H1 (cell line): ENCODE measurements at regions of chr20 and their contacts with region 1.

Region 1: DNA sequence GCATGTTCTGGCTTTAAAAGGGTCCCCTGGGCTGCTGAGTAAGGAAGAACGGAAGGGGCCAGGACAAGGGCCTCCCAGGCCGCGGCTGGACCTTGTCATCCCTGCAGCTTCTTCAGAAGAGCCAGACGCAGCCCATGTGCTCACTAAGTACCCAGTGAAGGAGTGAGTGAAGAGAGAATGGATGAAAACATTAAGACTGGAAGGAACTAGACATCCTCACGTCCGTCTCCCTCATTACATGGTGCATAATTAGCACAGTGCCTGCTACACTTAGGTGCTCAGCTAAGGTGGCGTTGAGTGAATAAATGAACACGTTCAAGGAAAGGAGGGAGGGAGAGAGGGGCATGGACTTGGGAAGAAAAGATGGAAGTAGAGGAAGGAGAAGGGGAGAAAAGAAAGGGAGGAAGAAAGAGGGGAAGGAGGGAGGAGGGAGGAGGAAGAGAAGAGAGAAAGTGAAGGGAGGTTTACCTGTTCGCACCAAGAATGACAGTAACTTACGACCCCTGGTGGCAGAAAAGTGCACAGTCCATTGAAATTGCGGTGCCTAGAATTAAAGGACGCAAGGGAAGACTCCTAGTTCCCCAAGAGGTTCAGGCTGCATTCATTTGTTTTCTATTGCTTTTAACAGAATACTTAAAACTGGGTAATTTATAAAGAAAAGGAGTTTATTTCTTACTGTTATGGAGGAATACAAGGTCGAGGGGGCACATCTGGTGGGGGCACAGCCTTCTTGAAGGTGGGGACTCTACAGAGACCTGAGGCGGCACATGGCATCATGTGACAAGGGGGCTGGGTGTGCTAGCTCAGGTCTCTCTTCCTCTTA is 8.0 kb downstream of the TP53RK start:
- DNase-seq: peak in 1 of 2 experiments; percentile 92
- H3K4me3 ChIP-seq: no peak overlapping the region
- H3K27ac ChIP-seq: no peak overlapping the region
- H3K4me1 ChIP-seq: peaks cover 12 to 22% (median 16%) of the 10 kb centered on the region in 4 experiments
- H3K27me3 ChIP-seq: no peaks in the 10 kb centered on the region
- CTCF ChIP-seq: peak; percentile 49 to 91 (median 79)
- EP300 ChIP-seq: no peak
- POLR2A ChIP-seq: no peak
- RAD21 ChIP-seq: peak; percentile 77 to 80

Region 2: DNA sequence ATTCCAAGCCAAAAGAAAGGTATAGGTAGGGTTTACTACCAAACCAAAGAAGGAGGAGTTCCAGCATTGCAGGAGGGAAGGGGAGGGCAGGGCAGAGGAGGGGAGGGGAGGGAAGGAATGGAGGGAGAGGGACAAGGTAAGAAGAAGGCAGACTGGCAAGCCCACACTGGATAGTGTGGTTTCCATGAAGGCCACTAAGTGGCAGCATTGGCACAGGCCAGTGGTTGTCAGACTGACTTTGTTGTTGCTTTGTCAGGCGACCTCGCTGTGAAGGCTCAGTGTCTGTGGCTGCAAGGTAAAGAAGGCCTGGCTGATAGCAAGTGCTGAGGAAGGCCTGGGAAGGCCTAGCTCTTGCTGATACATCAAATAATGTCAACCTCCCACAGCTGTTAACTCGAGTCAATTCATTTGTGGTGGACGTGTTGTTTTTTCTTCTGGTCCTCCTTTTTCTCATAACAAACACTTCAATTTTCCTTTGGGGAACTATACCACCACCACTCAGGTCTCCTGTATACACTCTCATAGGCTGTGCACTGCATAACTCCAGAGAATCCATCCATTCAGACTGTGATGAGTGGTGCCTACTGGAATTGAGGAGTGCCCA is 160.2 kb before region 1 on chr20:
- CTCF ChIA-PET with region 1: interaction called, 63 read pairs
- POLR2A ChIA-PET with region 1: interaction called, 10 read pairs
- DNase-seq: peak; percentile 59 to 71
- H3K4me3 ChIP-seq: no peak overlapping the region
- H3K27ac ChIP-seq: no peak overlapping the region
- H3K4me1 ChIP-seq: no peaks in the 10 kb centered on the region; a peak in 1 of 7 replicates
- H3K27me3 ChIP-seq: no peaks in the 10 kb centered on the region
- CTCF ChIP-seq: peak; percentile 87 to 99 (median 91)
- EP300 ChIP-seq: no peak
- POLR2A ChIP-seq: no peak
- RAD21 ChIP-seq: peak; percentile 95 to 99

Region 3: GRCh38 chr20:46552460-46553420 is 128.5 kb before region 1 on chr20:
- CTCF ChIA-PET with region 1: interaction called, 10 read pairs
- POLR2A ChIA-PET with region 1: interaction called, 6 read pairs
- DNase-seq: no peak
- H3K4me3 ChIP-seq: no peak overlapping the region
- H3K27ac ChIP-seq: no peak overlapping the region
- H3K4me1 ChIP-seq: peaks cover 12 to 33% (median 23%) of the 10 kb centered on the region in 4 experiments
- H3K27me3 ChIP-seq: no peaks in the 10 kb centered on the region; a peak in 2 of 7 replicates
- CTCF ChIP-seq: no peak
- EP300 ChIP-seq: no peak
- POLR2A ChIP-seq: no peak
- RAD21 ChIP-seq: no peak

Region 4: DNA sequence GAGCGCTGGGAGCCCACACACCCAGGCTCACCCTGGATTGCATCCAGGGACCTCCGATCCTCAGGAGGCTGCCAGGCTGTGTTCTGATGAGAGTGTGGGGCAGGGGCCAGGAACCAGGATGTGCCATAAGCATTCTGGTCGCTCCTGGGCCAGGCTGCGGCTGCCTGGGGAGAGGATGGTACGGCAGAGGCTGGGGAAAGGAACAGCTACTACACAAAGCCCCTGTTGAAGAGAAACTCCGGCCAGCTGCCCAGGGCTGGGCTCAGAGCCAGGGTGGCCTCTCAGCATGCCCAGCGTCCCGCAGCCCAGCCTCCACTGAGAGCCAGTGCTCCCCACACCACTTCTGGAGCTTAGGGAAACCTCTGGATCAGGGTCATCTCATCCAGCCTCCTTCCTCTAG is 109.1 kb before region 1 on chr20:
- CTCF ChIA-PET with region 1: interaction called, 10 read pairs
- POLR2A ChIA-PET with region 1: interaction called, 4 read pairs
- DNase-seq: no peak
- H3K4me3 ChIP-seq: no peak overlapping the region
- H3K27ac ChIP-seq: no peak overlapping the region
- H3K4me1 ChIP-seq: no peaks in the 10 kb centered on the region; a peak in 3 of 7 replicates
- H3K27me3 ChIP-seq: no peaks in the 10 kb centered on the region
- CTCF ChIP-seq: no peak
- EP300 ChIP-seq: no peak
- POLR2A ChIP-seq: no peak
- RAD21 ChIP-seq: no peak

Region 5: GRCh38 chr20:46642265-46642968 is 38.8 kb before region 1 on chr20:
- CTCF ChIA-PET with region 1: interaction called, 11 read pairs
- POLR2A ChIA-PET with region 1: interaction called, 5 read pairs
- DNase-seq: no peak
- H3K4me3 ChIP-seq: no peak overlapping the region
- H3K27ac ChIP-seq: no peak overlapping the region
- H3K4me1 ChIP-seq: peaks cover 0 to 4% (median 2%) of the 10 kb centered on the region in 4 experiments; a peak in 3 of 7 replicates
- H3K27me3 ChIP-seq: no peaks in the 10 kb centered on the region
- CTCF ChIP-seq: no peak
- EP300 ChIP-seq: no peak
- POLR2A ChIP-seq: no peak
- RAD21 ChIP-seq: no peak

Region 6: DNA sequence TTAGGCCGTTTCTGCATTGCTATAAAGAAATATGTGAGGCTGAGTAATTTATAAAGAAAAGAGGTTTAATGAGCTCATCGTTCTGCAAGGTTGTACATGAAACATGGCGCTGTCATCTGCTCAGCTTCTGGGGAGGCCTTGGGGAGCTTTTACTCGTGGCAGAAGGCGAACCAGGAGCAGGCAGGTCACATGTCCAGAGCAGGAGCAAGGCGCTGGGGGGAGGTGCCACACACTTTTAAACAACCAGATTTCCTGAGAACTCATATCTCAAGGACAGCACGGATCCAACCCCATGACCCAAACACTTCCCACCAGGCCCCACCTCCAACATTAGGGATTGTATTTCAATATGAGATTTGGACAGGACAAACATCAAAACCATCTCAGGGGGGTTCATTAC is 23.6 kb before region 1 on chr20:
- CTCF ChIA-PET with region 1: interaction called, 11 read pairs
- POLR2A ChIA-PET with region 1: interaction called, 4 read pairs
- DNase-seq: no peak
- H3K4me3 ChIP-seq: no peak overlapping the region
- H3K27ac ChIP-seq: no peak overlapping the region
- H3K4me1 ChIP-seq: no peaks in the 10 kb centered on the region
- H3K27me3 ChIP-seq: no peaks in the 10 kb centered on the region
- CTCF ChIP-seq: no peak
- EP300 ChIP-seq: no peak
- POLR2A ChIP-seq: no peak
- RAD21 ChIP-seq: no peak

Region 7: DNA sequence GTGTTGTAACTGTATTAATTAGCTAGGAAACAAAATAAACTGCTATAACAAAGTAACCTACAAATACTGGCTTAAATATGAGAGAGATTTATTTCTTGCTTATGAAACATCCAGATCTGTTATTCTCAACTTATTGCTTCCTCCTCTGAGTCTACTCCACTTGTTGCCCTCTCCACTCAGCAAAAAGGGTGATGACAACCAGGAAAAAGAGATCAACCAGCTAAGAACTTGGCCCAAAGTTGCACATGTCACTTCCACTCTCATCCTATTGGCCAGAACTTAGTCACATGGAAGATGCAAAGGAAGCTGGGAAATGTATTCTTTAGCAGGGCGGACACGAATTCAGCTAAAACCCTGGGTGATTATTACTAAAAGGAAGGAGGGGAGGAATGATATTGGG is 13.3 kb after region 1 on chr20:
- CTCF ChIA-PET with region 1: interaction called, 17 read pairs
- POLR2A ChIA-PET with region 1: interaction called, 36 read pairs
- DNase-seq: no peak
- H3K4me3 ChIP-seq: no peak overlapping the region
- H3K27ac ChIP-seq: no peak overlapping the region
- H3K4me1 ChIP-seq: no peaks in the 10 kb centered on the region; a peak in 1 of 7 replicates
- H3K27me3 ChIP-seq: no peaks in the 10 kb centered on the region
- CTCF ChIP-seq: no peak
- EP300 ChIP-seq: no peak
- POLR2A ChIP-seq: no peak
- RAD21 ChIP-seq: no peak